ENCODE measurements at regions of chr18 and their contacts with region 1.

Region 1: DNA sequence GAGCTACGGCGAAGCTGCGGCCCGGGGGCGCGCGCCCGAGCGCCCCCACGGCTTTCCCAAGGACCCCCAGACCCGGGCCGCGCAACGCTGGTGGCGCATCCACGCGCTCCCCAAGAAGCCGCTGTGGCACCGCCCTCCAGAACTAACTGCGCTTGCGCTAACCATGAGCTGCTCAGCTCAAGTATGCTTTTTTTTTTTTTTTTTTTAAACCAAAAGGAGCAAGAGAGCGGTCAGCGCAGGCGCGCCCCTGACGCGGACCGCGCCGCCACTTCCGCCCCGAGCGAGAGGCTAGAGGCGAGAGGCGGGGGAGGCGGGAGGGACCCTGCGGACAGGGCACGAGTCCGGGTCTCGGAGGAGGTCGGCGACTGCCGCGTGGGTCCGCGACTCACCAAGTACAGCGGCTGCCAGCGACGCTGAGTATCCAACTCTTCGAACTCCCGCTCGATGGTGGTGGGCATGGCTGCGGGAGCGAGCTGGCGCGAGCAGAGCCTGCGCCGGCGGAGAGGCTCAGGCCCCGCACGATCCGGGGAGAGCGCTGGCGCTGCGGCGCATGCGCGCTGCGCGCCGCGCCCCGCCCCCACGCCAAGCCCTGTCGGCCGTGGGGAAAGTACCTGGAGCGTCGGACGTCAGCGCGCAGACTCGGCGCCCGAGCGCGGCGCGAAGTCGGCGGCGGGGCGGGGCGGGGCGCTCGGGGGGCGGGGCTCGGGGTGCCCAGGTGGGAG is at the start of gene PTPN2:
- DNase-seq: peak; percentile 96
- ATAC-seq: peak; percentile 90
- H3K4me3 ChIP-seq: peak within 1 kb of the TSS; percentile 95
- H3K27ac ChIP-seq: peak within 1 kb of the TSS; percentile 93
- H3K4me1 ChIP-seq: peaks cover 16% of the 10 kb centered on the region
- H3K27me3 ChIP-seq: no peaks in the 10 kb centered on the region
- CTCF ChIP-seq: no peak
- total RNA-seq, gene PTPN2: 59.8 and 62.4 TPM in 2 replicates

Region 2: DNA sequence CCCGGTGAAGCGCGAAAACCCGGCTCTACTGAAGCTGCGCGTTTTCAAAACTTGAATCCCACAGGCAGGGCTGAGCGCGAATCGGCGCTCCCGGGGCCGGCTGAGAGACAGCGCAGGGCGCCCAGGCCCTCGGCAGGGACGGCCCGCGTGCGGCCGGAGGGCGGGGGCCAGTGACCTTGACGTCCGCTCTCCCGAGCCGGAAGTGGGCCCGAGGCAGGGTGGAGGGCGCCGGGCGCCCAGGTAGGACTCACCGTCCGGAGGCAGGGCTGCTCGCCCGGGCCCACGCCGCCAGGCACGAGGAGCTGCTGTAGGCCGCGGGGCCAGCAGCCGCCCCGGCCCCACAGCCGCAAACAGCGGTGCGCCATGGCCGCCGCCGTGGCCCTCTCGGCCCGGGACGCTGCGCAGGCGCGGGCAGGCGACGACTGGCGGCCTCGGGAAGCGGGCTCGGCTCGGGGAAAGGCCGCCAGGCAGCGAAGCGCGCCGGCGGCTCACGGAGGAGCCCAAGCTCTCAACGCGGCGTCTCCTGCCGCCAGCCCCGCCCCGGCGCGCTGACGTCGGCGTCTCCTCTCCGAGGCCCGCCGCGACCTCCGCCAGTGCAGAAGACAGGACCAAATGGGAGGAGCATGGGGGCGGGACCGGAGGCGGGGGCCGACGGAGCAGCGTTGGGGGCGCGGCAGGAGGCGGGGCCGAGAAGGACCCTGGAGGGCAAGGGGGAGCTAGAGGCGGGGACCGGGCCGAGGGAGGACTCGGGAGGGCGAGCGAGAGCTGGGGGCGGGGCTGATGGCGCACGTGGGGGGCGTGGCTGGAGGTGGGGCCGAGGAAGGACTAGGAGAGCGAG is 506.9 kb before region 1 on chr18 and contains the start of gene AFG3L2:
- CTCF ChIA-PET with region 1: no interaction called
- POLR2A ChIA-PET with region 1: interaction called, 21 read pairs
- intact Hi-C with region 1: no loop called
- DNase-seq: peak; percentile 98
- ATAC-seq: peak; percentile 84
- H3K4me3 ChIP-seq: peak within 1 kb of the TSS; percentile 84
- H3K27ac ChIP-seq: peak within 1 kb of the TSS; percentile 94
- H3K4me1 ChIP-seq: peaks cover 29% of the 10 kb centered on the region
- H3K27me3 ChIP-seq: no peaks in the 10 kb centered on the region
- CTCF ChIP-seq: no peak
- total RNA-seq, gene AFG3L2: 79.3 and 95.7 TPM in 2 replicates

Region 3: GRCh38 chr18:12726774-12727550 is 156.9 kb before region 1 on chr18:
- CTCF ChIA-PET with region 1: no interaction called
- POLR2A ChIA-PET with region 1: interaction called, 17 read pairs
- intact Hi-C with region 1: no loop called
- DNase-seq: peak; percentile 92
- ATAC-seq: peak; percentile 74
- H3K4me3 ChIP-seq: no peak overlapping the region
- H3K27ac ChIP-seq: no peak overlapping the region
- H3K4me1 ChIP-seq: no peaks in the 10 kb centered on the region
- H3K27me3 ChIP-seq: no peaks in the 10 kb centered on the region
- CTCF ChIP-seq: peak; percentile 94

Region 4: DNA sequence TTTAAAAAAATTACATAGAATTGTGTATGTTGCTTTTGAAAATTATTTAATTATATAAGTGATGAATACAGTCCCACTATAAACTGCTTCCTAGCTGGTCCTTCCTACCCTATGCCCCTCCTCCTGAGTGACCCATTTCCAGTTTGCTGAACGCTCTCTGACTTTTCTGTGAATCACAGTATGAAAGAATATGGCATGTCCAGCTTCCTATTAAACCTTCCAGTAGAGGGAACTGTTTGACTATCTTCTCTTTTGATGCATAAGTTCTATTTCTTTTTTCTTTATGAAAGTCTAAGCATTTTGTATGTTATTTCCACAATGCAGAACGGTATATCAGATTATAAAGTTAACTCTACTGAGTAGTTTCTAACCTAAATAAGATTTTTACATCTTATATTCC is 139.7 kb before region 1 on chr18:
- CTCF ChIA-PET with region 1: interaction called, 4 read pairs
- POLR2A ChIA-PET with region 1: interaction called, 5 read pairs
- intact Hi-C with region 1: loop called (anchors 1 kb)
- DNase-seq: peak; percentile 92
- ATAC-seq: peak; percentile 56
- H3K4me3 ChIP-seq: no peak overlapping the region
- H3K27ac ChIP-seq: no peak overlapping the region
- H3K4me1 ChIP-seq: peaks cover 27% of the 10 kb centered on the region
- H3K27me3 ChIP-seq: no peaks in the 10 kb centered on the region
- CTCF ChIP-seq: peak; percentile 91

Region 5: GRCh38 chr18:12786669-12787068 is 97.2 kb before region 1 on chr18:
- CTCF ChIA-PET with region 1: no interaction called
- POLR2A ChIA-PET with region 1: no interaction called
- intact Hi-C with region 1: no loop called
- DNase-seq: no peak
- ATAC-seq: no peak
- H3K4me3 ChIP-seq: no peak overlapping the region
- H3K27ac ChIP-seq: no peak overlapping the region
- H3K4me1 ChIP-seq: no peaks in the 10 kb centered on the region
- H3K27me3 ChIP-seq: no peaks in the 10 kb centered on the region
- CTCF ChIP-seq: no peak

Region 6: DNA sequence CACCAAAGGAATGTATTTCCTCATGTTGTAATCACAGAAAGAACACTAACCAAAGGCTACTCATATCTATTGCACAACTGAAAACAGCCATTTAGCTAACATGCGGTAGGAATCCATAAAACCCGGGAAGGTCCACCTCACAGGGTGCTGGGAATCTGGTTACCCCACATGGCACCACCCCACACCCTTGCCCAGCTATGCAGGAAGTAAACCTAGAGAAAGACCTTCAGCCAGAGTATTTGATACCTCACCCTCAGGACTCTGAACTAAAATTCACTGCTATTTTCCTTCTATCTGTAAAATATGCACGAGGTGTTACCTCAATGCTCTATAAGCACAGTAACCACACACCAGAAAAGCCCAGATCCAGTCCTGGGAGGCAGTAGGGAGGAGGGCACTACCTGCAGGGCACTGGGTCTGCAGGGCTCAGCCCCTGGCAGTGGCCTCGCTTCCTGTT is 45.6 kb before region 1 on chr18:
- CTCF ChIA-PET with region 1: interaction called, 4 read pairs
- POLR2A ChIA-PET with region 1: interaction called, 21 read pairs
- intact Hi-C with region 1: loop called (anchors 2 kb)
- DNase-seq: peak; percentile 91
- ATAC-seq: peak; percentile 80
- H3K4me3 ChIP-seq: peak overlapping the region; percentile 33; the same call in 1 of the 2 replicates
- H3K27ac ChIP-seq: peak overlapping the region; percentile 82
- H3K4me1 ChIP-seq: peaks cover 28% of the 10 kb centered on the region
- H3K27me3 ChIP-seq: no peaks in the 10 kb centered on the region
- CTCF ChIP-seq: no peak

Region 7: GRCh38 chr18:12862467-12862866 is 21.4 kb before region 1 on chr18:
- CTCF ChIA-PET with region 1: no interaction called
- POLR2A ChIA-PET with region 1: interaction called, 11 read pairs
- intact Hi-C with region 1: loop called (anchors 2 kb)
- DNase-seq: peak; percentile 82
- ATAC-seq: peak; percentile 72
- H3K4me3 ChIP-seq: no peak overlapping the region
- H3K27ac ChIP-seq: peak overlapping the region; percentile 72
- H3K4me1 ChIP-seq: peaks cover 23% of the 10 kb centered on the region
- H3K27me3 ChIP-seq: no peaks in the 10 kb centered on the region
- CTCF ChIP-seq: no peak

Region 8: DNA sequence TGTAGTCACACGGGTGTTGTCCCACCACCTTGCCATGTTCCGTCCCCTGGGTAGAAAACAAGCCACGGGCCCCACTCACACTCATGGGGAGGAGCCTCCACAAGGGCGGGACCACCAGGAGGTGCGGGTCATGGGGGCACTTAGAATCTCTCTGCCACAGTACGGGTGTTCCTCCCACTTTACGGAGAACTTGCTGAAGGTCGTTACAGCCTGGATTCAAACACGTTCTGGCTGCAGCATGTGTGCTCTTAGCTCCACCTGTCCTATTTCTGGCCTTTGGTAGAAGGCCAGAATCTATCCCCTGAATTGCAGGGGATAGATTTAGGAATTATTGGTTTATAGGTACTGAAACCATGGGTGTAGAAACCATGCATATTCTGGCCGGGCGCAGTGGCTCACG is 92.5 kb after region 1 on chr18:
- CTCF ChIA-PET with region 1: no interaction called
- POLR2A ChIA-PET with region 1: interaction called, 10 read pairs
- intact Hi-C with region 1: no loop called
- DNase-seq: no peak
- ATAC-seq: no peak
- H3K4me3 ChIP-seq: no peak overlapping the region
- H3K27ac ChIP-seq: no peak overlapping the region
- H3K4me1 ChIP-seq: no peaks in the 10 kb centered on the region
- H3K27me3 ChIP-seq: no peaks in the 10 kb centered on the region
- CTCF ChIP-seq: no peak

Measured in PC-3 (cell line).